Activated CD4-positive, alpha-beta memory T cell treated with anti-CD3 and anti-CD28 coated beads, Interleukin-2, amount 10 ng/mL, durations not matched to agents 7 days and 5 days (primary cell): ENCODE measurements at regions of chr2 and their contacts with region 1.

Region 1: DNA sequence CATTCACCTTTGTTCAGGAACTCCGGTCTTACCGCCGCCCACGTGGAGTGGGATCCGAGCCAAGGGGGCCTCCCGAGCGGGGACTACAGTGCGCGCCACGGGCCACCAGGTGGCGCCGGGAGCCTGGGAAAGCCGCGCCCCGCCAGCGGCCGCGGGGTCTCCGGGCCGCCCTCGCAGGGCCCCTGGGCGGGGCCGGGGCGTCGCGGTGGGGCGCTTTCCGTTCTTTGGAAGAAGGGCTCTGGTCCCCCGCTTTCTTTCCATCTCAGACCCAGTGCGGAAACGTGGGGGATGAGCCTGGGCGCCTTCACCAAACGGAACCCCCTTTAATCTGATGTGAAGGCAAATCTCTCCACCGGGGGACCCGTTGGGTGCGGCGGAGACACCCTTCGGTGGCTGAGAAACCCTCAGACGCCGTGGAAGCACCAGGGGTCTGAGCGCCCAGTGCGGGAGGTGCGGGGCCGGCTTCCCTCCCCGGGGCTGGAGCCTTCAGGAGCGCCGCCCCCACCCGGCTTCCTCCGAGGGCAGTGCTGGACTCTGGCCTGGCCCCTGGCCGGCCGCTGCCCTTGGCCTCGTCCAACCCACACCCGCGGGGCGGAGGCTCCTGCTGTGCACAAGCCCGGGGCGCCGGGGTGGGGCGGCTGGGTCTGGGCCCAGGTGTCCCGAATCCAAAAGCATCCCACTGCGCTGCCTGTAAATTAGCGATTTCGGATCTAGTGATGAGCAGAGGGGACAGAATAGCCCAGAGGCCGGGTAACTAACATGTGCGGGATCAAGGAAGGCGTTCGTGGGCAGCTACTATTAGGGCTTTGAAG is 44.6 kb downstream of the GORASP2 start:
- DNase-seq: peak; percentile 82
- H3K4me3 Mint-ChIP-seq: peak overlapping the region; percentile 71
- H3K27ac Mint-ChIP-seq: no peak overlapping the region
- H3K4me1 Mint-ChIP-seq: peaks cover 7% of the 10 kb centered on the region
- H3K27me3 Mint-ChIP-seq: peaks cover 3% of the 10 kb centered on the region

Region 2: DNA sequence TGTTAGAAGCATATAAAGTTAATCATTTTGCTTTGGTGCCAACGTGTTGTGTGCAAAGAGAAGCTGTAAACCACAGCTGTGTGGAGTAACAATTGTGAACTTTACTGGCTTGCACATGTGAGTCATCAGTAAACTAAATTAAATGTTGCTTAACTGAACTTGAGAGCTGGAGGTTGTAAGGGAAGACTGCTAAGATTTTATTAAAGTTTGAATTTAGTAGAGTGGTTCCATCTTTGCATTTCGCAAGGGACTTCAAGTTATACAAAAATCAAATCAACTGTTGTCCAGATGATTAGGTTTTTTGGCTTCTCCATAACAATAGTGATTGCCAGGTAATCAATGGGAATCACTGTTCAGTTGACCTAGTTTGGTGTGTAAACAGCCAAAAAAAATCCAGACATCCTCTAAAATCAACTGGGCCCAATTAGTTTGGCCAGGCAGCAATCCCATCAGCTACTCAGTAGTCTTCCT is 548.4 kb before region 1 on chr2:
- CTCF ChIA-PET with region 1: no interaction called
- POLR2A ChIA-PET with region 1: no interaction called
- DNase-seq: no peak
- H3K4me3 Mint-ChIP-seq: no peak overlapping the region
- H3K27ac Mint-ChIP-seq: no peak overlapping the region
- H3K4me1 Mint-ChIP-seq: no peaks in the 10 kb centered on the region
- H3K27me3 Mint-ChIP-seq: peaks cover 4% of the 10 kb centered on the region

Region 3: DNA sequence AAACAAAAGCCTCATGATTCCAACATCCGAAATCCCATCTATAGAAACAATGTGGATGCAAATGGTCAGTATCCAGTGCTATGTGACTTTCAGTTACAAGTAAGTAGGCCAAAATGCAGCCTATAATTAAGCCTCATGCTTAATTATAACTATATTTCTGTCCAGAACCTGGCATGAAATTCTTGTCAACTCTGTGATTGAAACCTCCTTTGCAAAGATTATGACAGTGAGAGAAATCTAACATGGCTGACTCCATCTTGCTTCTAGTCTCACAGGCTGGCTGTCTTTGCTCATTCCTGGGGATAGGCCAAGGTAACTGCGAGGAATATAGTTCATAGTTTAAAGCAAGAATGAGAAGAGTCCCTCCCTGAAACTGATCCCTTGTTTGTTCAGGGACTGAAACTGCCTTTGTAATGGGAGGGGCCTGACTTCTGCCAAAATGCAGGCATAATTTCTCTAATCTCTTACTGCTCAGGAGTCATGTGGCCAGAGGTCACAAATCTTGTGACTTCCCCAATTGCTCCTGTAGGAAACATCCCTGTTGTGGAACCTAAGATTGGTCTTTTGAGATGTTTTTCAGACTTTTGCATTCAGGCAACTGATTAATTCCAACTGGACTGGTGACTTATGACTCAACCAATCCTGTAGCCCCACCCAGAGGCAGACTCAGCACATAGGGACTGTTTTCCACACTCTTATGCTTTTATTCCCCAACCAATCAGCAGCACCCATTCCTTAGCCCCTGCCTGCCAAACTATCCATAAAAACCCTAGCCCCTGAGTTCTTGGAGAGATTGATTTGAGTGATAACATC is 271.5 kb after region 1 on chr2:
- CTCF ChIA-PET with region 1: no interaction called
- POLR2A ChIA-PET with region 1: no interaction called
- DNase-seq: no peak
- H3K4me3 Mint-ChIP-seq: no peak overlapping the region
- H3K27ac Mint-ChIP-seq: no peak overlapping the region
- H3K4me1 Mint-ChIP-seq: peaks cover 34% of the 10 kb centered on the region
- H3K27me3 Mint-ChIP-seq: peaks cover 4% of the 10 kb centered on the region

Region 4: GRCh38 chr2:171416009-171416926 is 442.6 kb after region 1 on chr2:
- CTCF ChIA-PET with region 1: interaction called, 49 read pairs
- POLR2A ChIA-PET with region 1: interaction called, 13 read pairs
- DNase-seq: peak; percentile 81
- H3K4me3 Mint-ChIP-seq: no peak overlapping the region
- H3K27ac Mint-ChIP-seq: no peak overlapping the region
- H3K4me1 Mint-ChIP-seq: peaks cover 15% of the 10 kb centered on the region
- H3K27me3 Mint-ChIP-seq: no peaks in the 10 kb centered on the region

Region 5: DNA sequence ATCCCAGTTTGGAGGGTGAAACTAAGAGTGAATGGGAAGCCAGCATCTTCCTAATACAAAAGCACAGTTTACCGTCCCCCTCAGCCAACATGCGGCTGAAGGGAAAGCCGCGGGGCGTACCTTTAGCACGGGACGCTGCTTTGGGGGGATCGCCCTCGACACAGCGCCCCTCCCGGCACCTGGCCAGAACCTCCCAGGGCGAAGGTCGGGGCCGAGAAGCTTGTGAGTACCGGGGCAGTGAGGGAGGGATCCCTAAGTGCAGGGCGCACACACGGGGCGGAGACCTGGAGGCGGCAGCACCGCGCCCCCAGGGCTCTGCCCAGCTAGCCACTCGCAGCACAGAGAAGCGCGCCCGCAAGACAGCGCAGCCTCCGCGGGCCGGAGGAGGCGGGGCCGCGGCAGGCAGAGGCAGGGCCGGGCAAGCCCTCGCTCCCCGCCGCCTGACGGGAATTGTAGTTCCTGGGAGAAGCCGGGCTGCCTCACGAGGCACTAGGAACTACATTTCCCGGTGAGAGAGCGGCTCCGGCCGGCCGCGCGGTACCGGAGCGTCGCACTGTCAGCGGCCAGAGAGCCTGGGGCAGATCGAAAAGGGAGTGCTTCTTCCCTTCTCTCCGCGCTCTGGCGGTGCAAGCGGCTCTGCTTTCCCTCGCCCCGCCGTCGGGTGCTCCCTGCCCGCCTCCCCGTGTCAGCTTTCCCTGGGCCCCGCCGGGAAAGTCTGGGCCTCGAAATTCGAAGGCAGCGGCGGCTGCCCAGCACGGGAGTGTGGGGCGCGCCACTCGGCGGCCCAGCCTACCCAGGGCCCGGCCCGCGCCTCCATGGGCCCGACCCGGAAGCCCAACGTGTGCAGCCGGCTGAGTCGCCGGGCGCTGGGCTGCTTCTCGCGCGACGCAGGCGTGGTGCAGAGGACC is 460.3 kb after region 1 on chr2 and contains the starts of genes DCAF17 and METTL8:
- CTCF ChIA-PET with region 1: interaction called, 10 read pairs
- POLR2A ChIA-PET with region 1: interaction called, 5 read pairs
- DNase-seq: peak; percentile 95
- H3K4me3 Mint-ChIP-seq: peak within 1 kb of the TSS; percentile 81
- H3K27ac Mint-ChIP-seq: peak within 1 kb of the TSS; percentile 96
- H3K4me1 Mint-ChIP-seq: peaks cover 33% of the 10 kb centered on the region
- H3K27me3 Mint-ChIP-seq: no peaks in the 10 kb centered on the region
- total RNA-seq, gene DCAF17: 12.8 to 14.8 TPM
- total RNA-seq, gene METTL8: 13.6 to 20.0 TPM